Ascending aorta (tissue), 2 donors: ENCODE measurements at regions of chr6 and their contacts with region 1.

Region 1: GRCh38 chr6:2021713-2022125 is 223.7 kb downstream of the GMDS start:
- DNase-seq: no peak
- H3K4me3 ChIP-seq: no peak overlapping the region
- H3K27ac ChIP-seq: no peak overlapping the region
- H3K4me1 ChIP-seq: no peaks in the 10 kb centered on the region
- H3K27me3 ChIP-seq: no peaks in the 10 kb centered on the region
- CTCF ChIP-seq: no peak

Region 2: GRCh38 chr6:1917626-1918371 is 103.9 kb before region 1 on chr6:
- intact Hi-C with region 1: loop called (anchors 10 kb)
- DNase-seq: peak; percentile 49 to 88
- H3K4me3 ChIP-seq: no peak overlapping the region
- H3K27ac ChIP-seq: peak overlapping the region; percentile 76 to 77
- H3K4me1 ChIP-seq: peaks cover 0 to 4% of the 10 kb centered on the region in 2 donors
- H3K27me3 ChIP-seq: no peaks in the 10 kb centered on the region
- CTCF ChIP-seq: no peak

Region 3: DNA sequence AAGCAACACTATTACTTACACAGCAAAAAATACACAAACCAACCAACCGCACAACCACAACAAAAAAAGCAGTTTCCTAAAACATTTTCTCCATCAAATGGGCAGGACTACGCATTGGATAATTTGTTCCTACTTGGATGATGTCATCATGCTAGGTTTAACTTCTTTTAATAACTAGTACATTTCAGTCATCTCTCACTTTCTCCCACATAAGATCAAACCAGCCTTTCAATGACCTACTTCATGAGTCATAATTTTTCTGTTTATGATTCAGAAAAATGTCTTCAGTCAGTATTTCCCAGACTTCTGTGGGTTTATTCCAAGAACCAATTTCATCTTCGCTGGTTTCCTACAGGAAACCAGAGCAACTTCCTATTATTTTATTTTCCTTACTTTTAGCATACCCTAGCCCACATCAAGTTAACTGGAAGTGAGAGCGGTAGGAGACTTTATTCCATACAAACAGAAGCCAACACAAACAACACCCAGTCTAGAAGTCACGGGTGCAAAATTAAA is 89.5 kb after region 1 on chr6:
- intact Hi-C with region 1: no loop called
- DNase-seq: no peak
- H3K4me3 ChIP-seq: peak overlapping the region in 1 of 2 donors; percentile 49
- H3K27ac ChIP-seq: peak overlapping the region; percentile 82 to 83
- H3K4me1 ChIP-seq: peaks cover 0 to 20% of the 10 kb centered on the region in 2 donors
- H3K27me3 ChIP-seq: no peaks in the 10 kb centered on the region
- CTCF ChIP-seq: no peak

Region 4: GRCh38 chr6:2196079-2196679 is 174.5 kb after region 1 on chr6:
- intact Hi-C with region 1: no loop called
- DNase-seq: no peak
- H3K4me3 ChIP-seq: no peak overlapping the region
- H3K27ac ChIP-seq: no peak overlapping the region
- H3K4me1 ChIP-seq: peaks cover 0 to 16% of the 10 kb centered on the region in 2 donors
- H3K27me3 ChIP-seq: no peaks in the 10 kb centered on the region
- CTCF ChIP-seq: peak; percentile 51 to 77 (median 75)